Activated CD4-positive, alpha-beta T cell treated with anti-CD3 and anti-CD28 coated beads, Interleukin-2, amount 10 ng/mL, durations not matched to agents 7 days and 5 days (primary cell): ENCODE measurements at regions of chr21 and their contacts with region 1.

Region 1: DNA sequence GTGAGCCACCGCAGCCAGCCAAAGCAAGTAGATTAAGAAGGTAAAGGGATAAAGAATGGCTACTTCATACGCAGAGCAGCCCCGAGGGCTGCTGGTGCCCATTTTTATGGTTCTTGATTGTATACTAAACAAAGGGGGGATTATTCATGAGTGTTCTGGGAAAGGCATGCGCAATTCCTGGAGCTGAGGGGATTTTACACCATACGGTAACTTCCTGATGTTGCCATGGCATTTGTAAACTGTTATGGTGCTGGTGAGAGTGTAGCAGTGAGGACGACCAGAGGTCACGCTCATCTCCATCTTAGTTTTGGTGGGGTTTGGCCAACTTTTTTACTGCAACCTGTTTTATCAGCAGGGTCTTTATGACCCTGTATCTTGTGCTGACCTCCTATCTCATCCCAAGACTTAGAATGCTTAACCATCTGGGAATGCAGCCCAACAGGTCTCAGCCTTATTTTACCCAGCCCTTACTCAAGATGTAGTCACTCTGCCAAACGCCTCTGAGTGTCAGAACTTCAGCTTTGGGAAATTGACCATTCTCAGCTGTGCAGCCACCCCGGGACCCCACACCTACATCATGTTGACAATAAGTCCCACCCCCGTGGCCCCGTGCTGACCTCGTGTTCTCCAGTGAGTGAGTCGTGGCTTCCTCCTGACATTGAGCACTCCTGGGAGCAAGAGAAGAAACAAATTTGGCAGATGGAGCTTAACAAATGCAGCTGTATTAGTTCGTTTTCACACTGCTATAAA is 149.4 kb upstream of the COL6A1 start:
- DNase-seq: no peak
- H3K4me3 Mint-ChIP-seq: no peak overlapping the region
- H3K27ac Mint-ChIP-seq: no peak overlapping the region
- H3K4me1 Mint-ChIP-seq: peaks cover 11% of the 10 kb centered on the region
- H3K27me3 Mint-ChIP-seq: no peaks in the 10 kb centered on the region

Region 2: DNA sequence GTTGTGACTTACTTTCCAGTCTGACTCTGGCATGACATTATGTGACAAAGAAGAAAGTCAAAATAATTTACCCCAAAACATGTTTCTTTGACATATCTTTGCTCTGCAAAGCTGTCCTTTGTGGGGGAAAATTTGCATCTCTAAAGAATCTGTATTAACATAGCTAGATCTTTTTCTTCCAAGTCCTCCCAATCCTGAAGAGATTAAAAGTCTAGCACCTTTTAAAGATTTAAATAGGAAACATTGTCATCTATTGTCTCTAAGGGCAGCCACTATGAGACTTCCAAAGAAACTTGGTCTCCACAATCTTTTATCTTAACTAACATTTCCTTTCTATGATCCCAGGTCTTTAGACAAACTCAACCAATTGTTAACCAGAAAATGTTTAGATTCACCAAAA is 1360.8 kb before region 1 on chr21:
- CTCF ChIA-PET with region 1: no interaction called
- POLR2A ChIA-PET with region 1: interaction called, 11 read pairs
- DNase-seq: no peak
- H3K4me3 Mint-ChIP-seq: no peak overlapping the region
- H3K27ac Mint-ChIP-seq: no peak overlapping the region
- H3K4me1 Mint-ChIP-seq: no peaks in the 10 kb centered on the region
- H3K27me3 Mint-ChIP-seq: peaks cover 4% of the 10 kb centered on the region